Naive thymus-derived CD8-positive, alpha-beta T cell (primary cell): ENCODE measurements at regions of chr11 and their contacts with region 1.

Region 1: GRCh38 chr11:75263944-75264349 is 23.4 kb downstream of the TPBGL start:
- DNase-seq: peak in 1 of 10 donors; percentile 64
- ATAC-seq: no peak
- H3K4me3 Mint-ChIP-seq: peak overlapping the region in 4 of 10 donors; percentile 1 to 26 (median 6)
- H3K27ac Mint-ChIP-seq: peak overlapping the region; percentile 16 to 93 (median 74)
- H3K4me1 Mint-ChIP-seq: peaks cover 31 to 63% (median 56%) of the 10 kb centered on the region in 4 donors
- H3K27me3 Mint-ChIP-seq: peaks cover 0 to 1% (median 0%) of the 10 kb centered on the region in 5 donors

Region 2: DNA sequence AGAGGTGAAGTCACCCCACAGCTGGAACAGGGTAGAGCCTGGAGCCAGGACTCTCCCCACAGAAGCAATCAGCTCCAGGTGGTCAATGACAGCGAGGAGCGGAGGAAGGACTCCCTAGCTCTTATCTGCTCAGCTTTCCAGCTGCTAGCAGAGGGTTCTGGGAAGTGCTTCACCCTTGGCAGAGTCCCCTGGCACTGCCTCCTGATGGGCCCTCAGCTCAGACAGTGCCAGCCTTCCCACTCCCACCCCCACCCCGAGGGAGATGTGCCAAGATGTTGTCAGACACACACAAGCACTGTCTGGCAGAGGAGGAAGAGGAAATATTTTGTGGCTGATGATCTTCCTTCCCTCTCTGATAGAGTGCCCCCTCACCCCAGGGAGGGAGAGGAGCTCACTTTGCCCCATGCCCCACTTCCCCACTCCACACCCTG is 68.8 kb before region 1 on chr11:
- POLR2A ChIA-PET with region 1: no interaction called
- DNase-seq: no peak
- ATAC-seq: no peak
- H3K4me3 Mint-ChIP-seq: no peak overlapping the region
- H3K27ac Mint-ChIP-seq: no peak overlapping the region
- H3K4me1 Mint-ChIP-seq: peaks cover 0 to 2% (median 0%) of the 10 kb centered on the region in 4 donors
- H3K27me3 Mint-ChIP-seq: no peaks in the 10 kb centered on the region

Region 3: GRCh38 chr11:75208446-75208845 is 55.5 kb before region 1 on chr11:
- POLR2A ChIA-PET with region 1: no interaction called
- DNase-seq: no peak
- ATAC-seq: no peak
- H3K4me3 Mint-ChIP-seq: no peak overlapping the region
- H3K27ac Mint-ChIP-seq: no peak overlapping the region
- H3K4me1 Mint-ChIP-seq: no peaks in the 10 kb centered on the region
- H3K27me3 Mint-ChIP-seq: peaks cover 9 to 28% (median 9%) of the 10 kb centered on the region in 5 donors

Region 4: GRCh38 chr11:75280227-75280701 is 16.3 kb after region 1 on chr11:
- POLR2A ChIA-PET with region 1: interaction called, 146 read pairs
- DNase-seq: peak; percentile 54 to 86 (median 72)
- ATAC-seq: peak; percentile 42
- H3K4me3 Mint-ChIP-seq: peak overlapping the region in 7 of 10 donors; percentile 7 to 56 (median 38)
- H3K27ac Mint-ChIP-seq: peak overlapping the region; percentile 79 to 97 (median 92)
- H3K4me1 Mint-ChIP-seq: peaks cover 33 to 56% (median 50%) of the 10 kb centered on the region in 4 donors
- H3K27me3 Mint-ChIP-seq: no peaks in the 10 kb centered on the region

Region 5: DNA sequence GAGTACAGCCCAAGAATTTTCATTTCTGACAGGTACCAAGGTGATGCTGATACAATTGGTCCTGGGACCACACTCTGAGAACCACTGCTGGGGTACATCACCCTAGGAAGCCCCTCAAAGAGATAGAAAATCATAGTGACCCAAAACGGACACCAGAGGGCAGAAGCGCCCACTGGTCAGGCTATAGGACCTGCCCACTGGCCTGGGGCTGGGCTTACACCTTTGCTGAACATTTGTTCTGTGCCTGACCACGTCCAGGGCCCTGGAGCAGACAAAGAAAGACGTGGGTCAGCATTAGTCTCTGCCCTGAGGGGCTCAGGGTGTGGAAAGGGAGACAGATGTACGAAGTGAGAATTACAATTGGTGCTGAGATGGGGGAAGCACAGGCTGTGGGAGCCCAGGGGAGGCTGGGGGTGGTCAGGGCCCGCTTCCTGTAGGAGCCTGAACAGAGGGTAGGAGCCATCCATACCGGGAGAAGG is 283.7 kb after region 1 on chr11:
- POLR2A ChIA-PET with region 1: no interaction called
- DNase-seq: peak in 3 of 10 donors; percentile 30 to 34 (median 31)
- ATAC-seq: peak in 1 of 2 donors; percentile 74
- H3K4me3 Mint-ChIP-seq: no peak overlapping the region
- H3K27ac Mint-ChIP-seq: peak overlapping the region in 1 of 10 donors; percentile 70
- H3K4me1 Mint-ChIP-seq: peaks cover 0 to 15% (median 5%) of the 10 kb centered on the region in 4 donors
- H3K27me3 Mint-ChIP-seq: peaks cover 0 to 7% (median 2%) of the 10 kb centered on the region in 5 donors